ENCODE measurements at regions of chr15 and their contacts with region 1.

Region 1: DNA sequence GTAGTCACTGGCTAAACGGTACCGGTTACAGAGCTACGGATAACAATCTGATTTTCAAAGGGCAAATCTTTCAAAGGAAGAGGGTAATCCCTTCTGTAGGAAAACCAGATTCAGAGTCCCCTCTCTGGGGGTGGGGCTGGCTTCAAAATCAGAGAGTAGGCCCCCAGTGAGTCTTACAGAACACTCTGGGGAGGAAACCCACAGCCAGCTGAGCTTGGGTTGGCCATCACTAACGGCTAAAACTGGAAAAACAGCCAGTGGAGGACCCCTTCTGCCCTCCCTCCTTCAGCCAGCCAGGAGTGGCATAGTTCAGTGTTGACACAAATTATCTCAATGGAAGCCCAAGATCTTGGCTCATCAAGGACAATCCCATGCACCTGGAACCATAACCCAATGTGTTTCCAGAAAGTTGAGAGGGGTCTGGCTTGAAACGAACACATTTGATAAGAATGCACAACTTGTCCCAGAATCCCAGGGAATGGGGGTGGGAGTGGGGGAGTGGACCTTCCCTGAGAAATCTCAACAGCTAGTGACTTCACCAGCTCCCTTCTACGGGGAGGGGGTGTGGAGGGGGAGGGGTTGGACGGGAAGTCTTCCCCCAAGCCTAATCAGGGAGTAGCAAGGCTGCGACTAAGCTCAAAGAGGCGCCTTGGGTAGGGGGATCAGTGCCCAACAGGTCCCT is 1.0 kb downstream of the RASL12 start:
- DNase-seq: no peak
- H3K4me3 ChIP-seq: no peak overlapping the region
- H3K27ac ChIP-seq: no peak overlapping the region
- H3K4me1 ChIP-seq: peaks cover 8% of the 10 kb centered on the region
- H3K27me3 ChIP-seq: peaks cover 13% of the 10 kb centered on the region
- CTCF ChIP-seq: no peak

Region 2: GRCh38 chr15:65042776-65043327 is 23.9 kb before region 1 on chr15:
- CTCF ChIA-PET with region 1: interaction called, 12 read pairs
- dilution Hi-C with region 1: no loop called
- in situ Hi-C with region 1: no loop called
- intact Hi-C with region 1: no loop called
- DNase-seq: no peak
- H3K4me3 ChIP-seq: no peak overlapping the region
- H3K27ac ChIP-seq: no peak overlapping the region
- H3K4me1 ChIP-seq: peaks cover 14% of the 10 kb centered on the region
- H3K27me3 ChIP-seq: no peaks in the 10 kb centered on the region
- CTCF ChIP-seq: no peak